ENCODE measurements at regions of chr9 and their contacts with region 1.

Region 1: DNA sequence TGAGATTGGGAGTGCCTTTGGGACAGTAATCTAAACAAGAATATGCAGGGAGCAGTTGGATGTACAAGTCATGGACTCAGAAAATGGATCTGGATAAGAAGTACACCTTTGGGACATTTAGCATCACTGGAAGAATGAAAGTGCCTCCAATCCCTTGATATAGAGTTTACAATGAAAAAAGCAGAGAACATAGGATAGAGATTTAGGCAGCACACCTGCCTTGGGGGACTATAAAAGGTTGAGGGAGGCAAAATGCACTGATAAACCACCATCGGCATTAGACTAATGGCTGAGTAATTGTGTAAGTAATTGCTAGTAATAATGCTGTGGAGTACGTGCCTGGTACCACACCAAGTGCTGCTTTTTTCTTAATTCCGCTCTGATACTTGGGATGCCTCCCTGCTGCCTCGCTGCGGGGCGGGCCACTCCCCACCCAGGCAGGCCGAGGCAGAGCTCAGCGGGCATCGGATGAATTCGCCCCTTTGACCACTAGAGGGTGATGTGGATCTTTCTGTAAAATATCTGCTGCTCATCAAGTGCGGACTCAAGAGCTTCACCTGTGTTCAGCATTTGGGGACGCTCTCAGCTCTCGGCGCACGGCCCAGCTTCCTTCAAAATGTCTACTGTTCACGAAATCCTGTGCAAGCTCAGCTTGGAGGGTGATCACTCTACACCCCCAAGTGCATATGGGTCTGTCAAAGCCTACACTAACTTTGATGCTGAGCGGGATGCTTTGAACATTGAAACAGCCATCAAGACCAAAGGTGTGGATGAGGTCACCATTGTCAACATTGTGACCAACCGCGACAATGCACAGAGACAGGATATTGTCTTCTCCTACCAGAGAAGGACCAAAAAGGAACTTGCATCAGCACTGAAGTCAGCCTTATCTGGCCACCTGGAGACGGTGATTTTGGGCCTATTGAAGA is 99.9 kb downstream of the ANKRD18B start:
- DNase-seq: peak; percentile 76
- H3K4me3 ChIP-seq: no peak overlapping the region
- H3K27ac ChIP-seq: no peak overlapping the region
- H3K4me1 ChIP-seq: no peaks in the 10 kb centered on the region
- CTCF ChIP-seq: peak; percentile 85

Region 2: DNA sequence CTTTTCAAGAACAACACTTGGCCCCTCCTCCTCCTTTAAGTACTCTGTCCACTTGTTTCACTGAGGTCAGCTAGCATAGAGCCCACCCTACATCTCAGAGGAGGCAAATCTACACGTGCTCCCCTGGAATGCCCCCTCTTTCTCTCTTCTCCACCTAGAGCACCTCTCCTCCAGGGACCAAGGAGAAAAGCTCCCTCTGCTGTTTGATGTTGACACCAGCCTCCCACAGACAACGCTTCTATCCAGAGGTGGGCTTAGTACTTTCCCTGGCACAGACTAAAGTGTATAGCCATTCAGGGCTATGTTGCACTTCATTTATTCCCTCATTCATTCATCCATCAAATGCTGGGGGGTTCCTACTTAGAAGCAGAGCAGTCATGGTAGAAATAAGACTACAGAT is 920.3 kb before region 1 on chr9:
- CTCF ChIA-PET with region 1: no interaction called
- POLR2A ChIA-PET with region 1: no interaction called
- intact Hi-C with region 1: no loop called
- DNase-seq: peak; percentile 33
- H3K4me3 ChIP-seq: no peak overlapping the region
- H3K27ac ChIP-seq: no peak overlapping the region
- H3K4me1 ChIP-seq: no peaks in the 10 kb centered on the region
- CTCF ChIP-seq: peak; percentile 61

Region 3: DNA sequence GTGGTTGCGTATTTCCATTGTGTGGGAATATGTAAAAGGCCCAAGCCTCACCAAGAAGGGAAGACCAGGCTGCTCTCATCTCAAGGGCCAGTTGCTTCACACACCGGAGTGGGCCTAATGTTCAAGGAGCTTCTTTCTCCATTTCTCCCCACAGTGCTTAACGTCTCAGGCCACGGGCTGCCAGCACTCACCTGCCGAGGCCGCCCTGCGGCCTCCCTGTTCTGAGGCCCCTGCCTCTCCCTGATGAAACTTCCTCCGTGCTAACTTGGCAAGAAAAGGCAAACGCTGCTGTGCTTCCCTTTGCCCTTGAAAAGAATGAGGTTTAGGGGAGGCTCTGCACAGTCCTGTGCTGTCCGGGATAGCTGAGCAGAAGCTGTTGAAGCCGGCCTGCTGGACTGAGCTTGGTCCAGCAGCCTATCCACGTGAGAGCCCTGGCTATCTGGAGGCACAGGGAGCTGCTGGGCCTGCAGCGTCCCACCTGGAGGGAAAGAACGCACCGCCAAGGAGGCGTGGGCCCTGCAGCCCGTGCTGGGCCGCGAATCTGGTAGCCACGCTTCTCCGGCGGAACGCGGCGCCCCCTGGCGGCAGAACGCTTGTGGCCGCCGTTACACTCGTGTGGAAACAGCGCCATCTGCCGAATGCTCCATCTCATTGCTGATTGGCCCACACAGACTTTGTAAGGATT is 97.9 kb after region 1 on chr9:
- CTCF ChIA-PET with region 1: interaction called, 20 read pairs
- POLR2A ChIA-PET with region 1: no interaction called
- intact Hi-C with region 1: loop called (anchors 1 kb)
- DNase-seq: peak; percentile 83
- H3K4me3 ChIP-seq: no peak overlapping the region
- H3K27ac ChIP-seq: no peak overlapping the region
- H3K4me1 ChIP-seq: no peaks in the 10 kb centered on the region
- CTCF ChIP-seq: peak; percentile 99

Region 4: DNA sequence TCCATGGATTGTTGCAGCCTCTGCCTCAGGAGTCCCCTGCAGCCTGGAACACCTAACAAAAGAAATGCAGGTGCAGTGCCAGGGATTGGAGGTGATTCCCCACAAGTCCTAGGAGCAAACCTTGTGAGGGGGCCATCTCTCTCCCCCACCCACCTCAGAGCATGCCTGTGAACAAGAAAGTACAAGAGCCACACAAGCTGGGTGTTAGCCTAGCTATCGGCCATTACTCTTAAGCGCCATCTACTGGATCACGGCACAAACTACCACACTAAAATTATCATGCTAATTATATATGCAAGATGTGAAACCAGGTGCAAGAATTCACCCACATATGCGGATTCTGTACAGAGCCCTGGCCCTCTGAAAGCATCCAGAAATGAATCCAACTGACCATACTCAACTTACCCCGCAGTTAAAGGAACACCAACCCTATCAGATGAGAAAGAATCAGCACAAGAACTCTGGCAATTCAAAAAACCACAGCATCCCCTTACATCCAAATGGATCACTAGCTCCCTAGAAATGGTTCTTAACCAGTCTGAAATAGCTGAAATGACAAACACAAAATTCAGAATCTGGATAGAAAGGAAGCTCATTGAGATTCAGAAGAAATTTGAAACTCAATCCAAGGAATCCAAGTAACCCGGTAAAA is 154.9 kb after region 1 on chr9:
- CTCF ChIA-PET with region 1: no interaction called
- POLR2A ChIA-PET with region 1: no interaction called
- intact Hi-C with region 1: loop called (anchors 2 kb)
- DNase-seq: peak; percentile 75
- H3K4me3 ChIP-seq: no peak overlapping the region
- H3K27ac ChIP-seq: no peak overlapping the region
- H3K4me1 ChIP-seq: peaks cover 4% of the 10 kb centered on the region
- CTCF ChIP-seq: peak; percentile 89

Region 5: GRCh38 chr9:33835625-33836260 is 211.8 kb after region 1 on chr9:
- CTCF ChIA-PET with region 1: no interaction called
- POLR2A ChIA-PET with region 1: no interaction called
- intact Hi-C with region 1: no loop called
- DNase-seq: no peak
- H3K4me3 ChIP-seq: no peak overlapping the region
- H3K27ac ChIP-seq: no peak overlapping the region
- H3K4me1 ChIP-seq: peaks cover 19% of the 10 kb centered on the region
- CTCF ChIP-seq: no peak